Psoas muscle (tissue), 8 donors: ENCODE measurements at regions of chr10 and their contacts with region 1.

Region 1: DNA sequence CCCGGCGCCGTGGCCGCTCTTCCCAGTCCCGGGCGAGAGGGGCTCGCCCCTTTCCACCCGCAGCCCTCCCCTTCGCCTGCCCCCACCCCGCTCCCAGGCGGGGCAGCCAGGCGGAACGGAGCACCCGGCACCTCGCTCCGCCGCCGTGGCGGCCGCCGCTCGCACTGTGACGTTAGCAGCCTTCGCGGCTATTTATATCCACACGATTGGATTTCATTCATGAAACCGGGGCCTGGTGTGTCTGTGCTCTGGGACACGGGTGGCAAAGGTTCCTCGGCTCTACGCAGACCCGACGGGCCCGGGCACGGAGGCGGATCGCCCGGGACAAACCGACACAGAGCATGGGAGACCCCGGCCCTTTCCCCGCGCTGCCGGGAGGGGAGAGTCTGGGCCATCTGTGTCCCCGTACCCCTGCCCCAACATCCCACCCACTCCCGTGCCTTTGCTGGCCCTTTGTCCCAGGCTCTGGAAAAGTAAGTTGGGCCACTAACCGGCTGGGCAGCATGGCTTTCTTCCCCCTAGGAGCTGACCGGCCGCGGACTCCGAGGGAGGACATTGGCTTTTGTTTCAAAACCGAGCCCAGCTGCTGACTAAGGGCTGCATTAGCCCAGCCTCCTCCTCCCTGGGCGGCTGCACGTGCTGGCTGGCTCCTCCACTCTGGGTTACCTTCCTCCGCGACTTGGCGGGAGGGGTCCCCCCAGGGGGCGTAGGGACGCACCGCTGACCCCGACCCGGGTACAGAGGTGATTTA is at the start of gene RHOBTB1:
- DNase-seq: peak; percentile 83 to 91
- ATAC-seq: peak; percentile 85 to 92 (median 88)
- H3K4me3 ChIP-seq: peak within 1 kb of the TSS; percentile 90
- H3K27ac ChIP-seq: peak within 1 kb of the TSS; percentile 99
- H3K4me1 ChIP-seq: peaks cover 29% of the 10 kb centered on the region
- H3K27me3 ChIP-seq: no peaks in the 10 kb centered on the region
- CTCF ChIP-seq: no peak
- total RNA-seq, gene RHOBTB1: 20.8 to 47.4 (median 30.7) TPM

Region 2: DNA sequence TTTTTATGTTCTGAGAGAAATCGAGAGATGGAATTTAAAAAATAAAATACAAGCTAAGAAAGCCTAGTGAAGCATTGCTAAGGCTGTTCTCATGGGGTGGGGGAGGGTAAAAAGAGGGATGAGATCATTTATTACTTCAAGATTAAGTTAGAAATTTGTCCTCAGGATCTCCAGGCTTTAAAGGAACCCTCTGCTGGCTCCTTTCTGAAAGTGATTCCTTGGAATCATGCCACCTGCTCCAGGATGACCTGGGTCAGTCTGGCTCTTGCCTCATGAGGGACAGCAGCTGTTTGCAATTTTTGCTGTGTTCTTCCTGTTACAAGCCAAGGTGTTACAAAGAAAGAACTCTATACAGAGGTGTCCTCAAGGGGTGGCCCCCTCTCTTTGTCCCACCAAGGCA is 96.2 kb before region 1 on chr10:
- intact Hi-C with region 1: loop called in 1 of 2 experiments (anchors 5 kb)
- DNase-seq: peak; percentile 25 to 70
- ATAC-seq: peak; percentile 75 to 84 (median 77)
- H3K4me3 ChIP-seq: peak overlapping the region; percentile 16
- H3K27ac ChIP-seq: peak overlapping the region; percentile 96
- H3K4me1 ChIP-seq: peaks cover 42% of the 10 kb centered on the region
- H3K27me3 ChIP-seq: no peaks in the 10 kb centered on the region
- CTCF ChIP-seq: peak; percentile 44

Region 3: DNA sequence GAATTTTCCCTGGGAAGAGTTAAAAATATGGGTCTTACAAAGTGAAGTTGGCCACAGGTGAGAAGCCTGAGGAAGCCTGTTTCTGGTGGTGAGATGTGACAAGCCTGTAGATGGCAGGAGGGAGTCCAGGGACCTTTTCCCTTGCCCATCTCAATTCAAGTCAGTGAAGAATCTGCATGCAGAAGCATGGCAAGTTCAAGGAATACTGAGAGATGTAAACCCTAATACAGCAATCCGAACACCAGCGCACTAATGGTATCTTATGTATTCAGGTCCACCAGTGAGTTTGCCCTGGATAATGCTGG is 74.0 kb before region 1 on chr10:
- intact Hi-C with region 1: loop called in 1 of 2 experiments (anchors 5 kb)
- DNase-seq: no peak
- ATAC-seq: peak in 1 of 4 donors; percentile 30
- H3K4me3 ChIP-seq: no peak overlapping the region
- H3K27ac ChIP-seq: peak overlapping the region; percentile 85
- H3K4me1 ChIP-seq: peaks cover 71% of the 10 kb centered on the region
- H3K27me3 ChIP-seq: no peaks in the 10 kb centered on the region
- CTCF ChIP-seq: peak; percentile 51

Region 4: GRCh38 chr10:60901561-60902235 is 42.6 kb before region 1 on chr10:
- intact Hi-C with region 1: loop called in 1 of 2 experiments (anchors 5 kb)
- DNase-seq: peak; percentile 60 to 92
- ATAC-seq: peak; percentile 85 to 95 (median 92)
- H3K4me3 ChIP-seq: no peak overlapping the region
- H3K27ac ChIP-seq: peak overlapping the region; percentile 95
- H3K4me1 ChIP-seq: peaks cover 69% of the 10 kb centered on the region
- H3K27me3 ChIP-seq: no peaks in the 10 kb centered on the region
- CTCF ChIP-seq: no peak

Region 5: GRCh38 chr10:60910543-60910942 is 33.8 kb before region 1 on chr10:
- intact Hi-C with region 1: loop called in 1 of 2 experiments (anchors 2 kb)
- DNase-seq: no peak
- ATAC-seq: no peak
- H3K4me3 ChIP-seq: peak overlapping the region; percentile 16
- H3K27ac ChIP-seq: peak overlapping the region; percentile 95
- H3K4me1 ChIP-seq: peaks cover 97% of the 10 kb centered on the region
- H3K27me3 ChIP-seq: no peaks in the 10 kb centered on the region
- CTCF ChIP-seq: no peak

Region 6: DNA sequence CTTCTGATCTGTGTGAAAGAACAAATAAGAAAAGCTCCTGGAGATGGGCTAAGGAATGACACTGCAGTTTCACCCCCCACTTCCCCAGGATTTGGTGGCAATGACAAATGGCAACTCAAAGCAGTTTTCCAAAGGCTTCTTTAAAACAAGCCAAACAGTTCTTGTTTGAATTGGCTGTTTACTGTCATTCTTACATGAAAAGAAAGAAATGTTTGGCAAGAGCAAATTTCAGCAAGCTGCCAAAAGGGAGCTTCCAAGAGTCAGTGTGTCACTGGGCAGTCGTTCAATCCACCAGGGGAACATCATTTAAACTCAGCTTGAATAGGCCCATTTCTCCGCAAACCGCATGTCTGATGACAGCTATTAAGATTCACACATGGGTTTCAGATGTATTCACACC is 118.7 kb after region 1 on chr10:
- intact Hi-C with region 1: no loop called
- DNase-seq: no peak
- ATAC-seq: no peak
- H3K4me3 ChIP-seq: no peak overlapping the region
- H3K27ac ChIP-seq: no peak overlapping the region
- H3K4me1 ChIP-seq: peaks cover under 1% of the 10 kb centered on the region
- H3K27me3 ChIP-seq: peaks cover 0 to 1% (median 0%) of the 10 kb centered on the region in 3 donors
- CTCF ChIP-seq: no peak